Right ventricle myocardium inferior (tissue), 1 donor: ENCODE measurements at regions of chr6 and their contacts with region 1.

Region 1: GRCh38 chr6:163956571-163957407 is 542.3 kb downstream of the QKI start:
- DNase-seq: peak; percentile 83
- ATAC-seq: peak; percentile 87

Region 2: DNA sequence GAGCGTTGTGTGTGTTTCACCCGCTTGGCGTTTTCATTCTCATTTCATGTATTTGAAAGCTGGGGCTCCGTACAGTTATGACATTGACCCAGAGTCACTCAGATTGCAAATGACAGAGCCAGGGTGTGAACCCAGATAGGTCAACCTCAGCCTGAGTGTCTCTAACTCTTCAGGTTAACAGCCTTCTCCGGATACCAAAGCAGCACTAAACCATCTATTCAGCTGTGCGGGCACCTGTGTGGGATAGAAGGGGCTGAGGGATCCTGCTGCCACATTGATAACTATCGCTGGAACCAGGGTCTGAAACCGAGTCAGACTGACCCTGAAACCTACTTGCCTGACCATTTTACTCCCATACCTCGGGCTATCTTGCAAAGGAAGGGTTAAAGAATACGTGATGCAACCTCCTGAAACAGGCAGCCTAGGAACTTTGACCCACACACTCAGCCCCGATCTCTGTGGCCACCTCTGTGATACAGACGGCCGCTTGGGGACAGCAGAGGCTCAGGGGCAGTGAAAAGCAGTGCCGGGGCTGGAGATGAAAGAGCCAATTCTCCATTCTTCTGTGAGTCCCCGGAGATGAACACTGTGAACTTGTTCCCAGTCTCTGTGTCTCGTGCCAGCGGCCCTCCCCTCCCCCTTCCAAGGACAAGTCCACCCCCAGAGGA is 775.8 kb before region 1 on chr6:
- intact Hi-C with region 1: loop called (anchors 5 kb)
- DNase-seq: peak; percentile 86
- ATAC-seq: peak; percentile 95

Region 3: GRCh38 chr6:163579880-163580295 is 376.9 kb before region 1 on chr6:
- intact Hi-C with region 1: loop called (anchors 5 kb)
- DNase-seq: no peak
- ATAC-seq: peak; percentile 38

Region 4: GRCh38 chr6:163645560-163645959 is 311.2 kb before region 1 on chr6:
- intact Hi-C with region 1: loop called (anchors 5 kb)
- DNase-seq: no peak
- ATAC-seq: no peak

Region 5: DNA sequence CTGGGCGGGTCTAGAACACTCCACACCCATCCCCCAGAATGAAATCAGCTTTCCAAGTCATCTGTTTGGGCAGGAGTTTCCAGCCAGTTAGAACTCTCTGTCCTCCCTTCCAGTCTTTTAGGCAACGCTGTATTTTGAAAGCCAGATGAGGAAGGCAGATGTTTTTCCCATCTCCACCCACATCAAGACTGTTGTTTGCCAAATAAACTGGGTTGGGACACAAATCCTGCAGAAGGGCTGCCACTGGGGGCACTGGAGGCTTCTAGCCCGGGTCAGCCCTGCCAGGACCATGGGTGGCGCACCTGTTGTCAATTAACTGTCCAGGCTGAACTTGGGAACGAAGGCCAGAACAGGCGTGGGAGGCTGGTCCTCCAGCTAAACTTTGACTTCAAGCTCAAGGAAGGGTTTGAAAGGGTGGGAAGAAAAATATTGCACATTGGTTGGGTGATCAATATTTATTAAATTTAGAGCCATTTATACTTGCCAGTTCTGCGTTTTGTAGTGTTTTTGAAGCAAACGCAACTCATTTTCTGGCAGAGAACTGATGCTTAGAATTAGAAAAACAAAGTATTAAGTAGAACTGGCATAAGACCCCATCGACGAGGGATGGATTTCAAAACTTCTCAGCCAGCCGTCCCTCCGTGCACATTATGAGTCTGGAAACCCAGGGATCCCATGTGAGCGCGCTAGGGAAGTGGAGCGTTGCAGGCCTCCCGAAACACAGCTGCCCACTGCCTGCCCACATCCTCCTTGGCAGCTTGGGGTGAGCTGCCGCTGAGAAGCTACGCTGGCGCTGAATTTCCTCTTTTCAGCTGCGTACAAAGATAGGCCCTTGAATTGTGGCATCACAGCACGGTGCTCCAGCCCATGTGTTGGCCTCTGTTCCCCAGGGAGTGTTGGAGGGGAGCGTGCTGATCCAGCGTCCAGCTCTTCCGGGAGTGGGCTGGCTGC is 244.9 kb before region 1 on chr6:
- intact Hi-C with region 1: loop called (anchors 1 kb)
- DNase-seq: peak; percentile 91
- ATAC-seq: peak; percentile 85

Region 6: DNA sequence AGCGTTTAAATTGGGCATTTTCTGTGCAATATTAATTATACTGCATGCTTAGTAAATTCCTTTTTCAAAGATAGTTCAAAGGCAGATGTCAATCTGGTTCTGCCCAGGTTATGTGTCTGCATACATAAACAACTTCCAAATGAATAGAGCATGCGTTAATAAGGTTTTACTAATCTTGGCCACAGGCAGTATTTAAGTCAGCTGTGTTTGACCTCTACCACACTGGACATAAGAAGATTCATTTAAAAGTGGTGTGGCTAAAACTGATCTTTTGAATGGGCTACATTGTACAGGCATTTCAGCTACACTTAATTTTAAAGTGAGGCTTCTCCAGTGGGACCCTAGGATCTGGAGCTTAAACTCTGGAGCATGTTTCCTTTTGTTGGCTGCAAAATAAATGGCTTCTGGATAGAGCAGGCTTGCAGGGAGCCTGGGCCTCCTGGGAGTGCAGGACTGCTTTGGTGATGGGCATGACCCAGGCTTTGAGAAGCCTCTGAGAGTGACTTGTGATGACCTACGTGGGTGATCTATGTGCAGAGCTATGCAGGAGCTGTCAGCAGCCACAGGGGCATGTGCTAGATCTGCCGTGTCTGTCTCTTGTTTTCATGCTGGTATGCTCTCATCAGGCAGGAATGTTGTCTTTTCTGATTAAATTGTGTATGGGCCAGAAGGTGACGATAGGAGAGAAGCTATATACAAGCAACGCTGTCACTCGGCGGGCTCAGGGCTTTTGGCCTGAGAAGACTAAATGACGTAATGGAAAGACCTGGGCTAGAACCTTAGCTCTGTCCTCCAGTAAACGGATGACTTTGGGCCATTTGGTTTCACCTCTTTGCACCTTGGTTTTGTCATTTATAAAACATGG is 211.0 kb before region 1 on chr6:
- intact Hi-C with region 1: loop called (anchors 5 kb)
- DNase-seq: no peak
- ATAC-seq: peak; percentile 94

Region 7: GRCh38 chr6:164927288-164928056 is 970.7 kb after region 1 on chr6:
- intact Hi-C with region 1: loop called (anchors 10 kb)
- DNase-seq: peak; percentile 70
- ATAC-seq: peak; percentile 92